HepG2 (cell line): ENCODE measurements at regions of chr20 and their contacts with region 1.

Region 1: DNA sequence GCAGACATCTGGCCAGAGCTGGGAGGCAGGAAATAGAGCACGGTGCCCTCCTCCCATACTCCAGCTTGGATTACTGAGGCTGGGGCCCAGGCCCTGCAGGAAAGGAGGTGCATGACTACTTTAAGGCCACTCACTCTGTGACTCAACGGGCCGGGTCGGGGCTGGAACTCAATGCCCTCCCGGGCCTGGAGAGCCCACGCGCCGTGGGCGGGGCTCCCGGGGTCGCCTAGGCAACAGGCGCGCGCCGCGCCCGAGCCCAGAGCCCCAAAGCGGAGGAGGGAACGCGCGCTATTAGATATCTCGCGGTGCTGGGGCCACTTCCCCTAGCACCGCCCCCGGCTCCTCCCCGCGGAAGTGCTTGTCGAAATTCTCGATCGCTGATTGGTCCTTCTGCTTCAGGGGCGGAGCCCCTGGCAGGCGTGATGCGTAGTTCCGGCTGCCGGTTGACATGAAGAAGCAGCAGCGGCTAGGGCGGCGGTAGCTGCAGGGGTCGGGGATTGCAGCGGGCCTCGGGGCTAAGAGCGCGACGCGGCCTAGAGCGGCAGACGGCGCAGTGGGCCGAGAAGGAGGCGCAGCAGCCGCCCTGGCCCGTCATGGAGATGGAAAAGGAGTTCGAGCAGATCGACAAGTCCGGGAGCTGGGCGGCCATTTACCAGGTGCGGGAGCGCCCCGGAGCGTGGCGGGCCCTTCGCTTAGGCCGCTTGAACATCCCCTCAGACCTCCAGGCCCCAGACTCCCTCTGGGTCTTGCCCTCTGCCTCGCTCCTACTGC is at the start of gene PTPN1:
- DNase-seq: peak; percentile 99
- ATAC-seq: peak; percentile 95
- H3K4me3 ChIP-seq: peak within 1 kb of the TSS; percentile 83 to 99 (median 87)
- H3K27ac ChIP-seq: peak within 1 kb of the TSS; percentile 78
- H3K4me1 ChIP-seq: peaks cover 62% of the 10 kb centered on the region
- H3K27me3 ChIP-seq: no peaks in the 10 kb centered on the region; a peak in 1 of 5 replicates
- CTCF ChIP-seq: peak; percentile 42; the same call in 1 of the 2 replicates
- EP300 ChIP-seq: peak; percentile 3 to 54; a peak in 1 of 4 replicates
- POLR2A ChIP-seq: peak; percentile 98
- RAD21 ChIP-seq: peak; percentile 67
- total RNA-seq, gene PTPN1: 33.3 and 37.2 TPM in 2 replicates

Region 2: GRCh38 chr20:50561379-50562078 is 51.4 kb after region 1 on chr20:
- CTCF ChIA-PET with region 1: no interaction called
- POLR2A ChIA-PET with region 1: interaction called, 3 read pairs
- in situ Hi-C with region 1: no loop called
- intact Hi-C with region 1: loop called (anchors 5 kb)
- DNase-seq: no peak
- ATAC-seq: no peak
- H3K4me3 ChIP-seq: no peak overlapping the region
- H3K27ac ChIP-seq: no peak overlapping the region
- H3K4me1 ChIP-seq: peaks cover 39% of the 10 kb centered on the region
- H3K27me3 ChIP-seq: no peaks in the 10 kb centered on the region
- CTCF ChIP-seq: no peak
- EP300 ChIP-seq: no peak
- POLR2A ChIP-seq: no peak
- RAD21 ChIP-seq: no peak

Region 3: GRCh38 chr20:50621068-50621665 is 111.0 kb after region 1 on chr20:
- CTCF ChIA-PET with region 1: no interaction called
- POLR2A ChIA-PET with region 1: no interaction called
- in situ Hi-C with region 1: no loop called
- intact Hi-C with region 1: no loop called
- DNase-seq: no peak
- ATAC-seq: no peak
- H3K4me3 ChIP-seq: no peak overlapping the region
- H3K27ac ChIP-seq: no peak overlapping the region
- H3K4me1 ChIP-seq: peaks cover 33% of the 10 kb centered on the region
- H3K27me3 ChIP-seq: no peaks in the 10 kb centered on the region; a peak in 2 of 5 replicates
- CTCF ChIP-seq: no peak
- EP300 ChIP-seq: no peak
- POLR2A ChIP-seq: no peak
- RAD21 ChIP-seq: no peak

Region 4: GRCh38 chr20:52256454-52256853 is 1746.3 kb after region 1 on chr20:
- CTCF ChIA-PET with region 1: no interaction called
- POLR2A ChIA-PET with region 1: no interaction called
- in situ Hi-C with region 1: no loop called
- intact Hi-C with region 1: no loop called
- DNase-seq: no peak
- ATAC-seq: no peak
- H3K4me3 ChIP-seq: no peak overlapping the region
- H3K27ac ChIP-seq: no peak overlapping the region
- H3K4me1 ChIP-seq: peaks cover 6% of the 10 kb centered on the region
- H3K27me3 ChIP-seq: 0 out of 5 replicates have a peak, but pooled peaks cover 0 to 4% of the 10 kb centered on the region in 2 experiments
- CTCF ChIP-seq: no peak
- EP300 ChIP-seq: no peak
- POLR2A ChIP-seq: no peak
- RAD21 ChIP-seq: no peak